ENCODE measurements at regions of chr9 and their contacts with region 1.

Region 1: DNA sequence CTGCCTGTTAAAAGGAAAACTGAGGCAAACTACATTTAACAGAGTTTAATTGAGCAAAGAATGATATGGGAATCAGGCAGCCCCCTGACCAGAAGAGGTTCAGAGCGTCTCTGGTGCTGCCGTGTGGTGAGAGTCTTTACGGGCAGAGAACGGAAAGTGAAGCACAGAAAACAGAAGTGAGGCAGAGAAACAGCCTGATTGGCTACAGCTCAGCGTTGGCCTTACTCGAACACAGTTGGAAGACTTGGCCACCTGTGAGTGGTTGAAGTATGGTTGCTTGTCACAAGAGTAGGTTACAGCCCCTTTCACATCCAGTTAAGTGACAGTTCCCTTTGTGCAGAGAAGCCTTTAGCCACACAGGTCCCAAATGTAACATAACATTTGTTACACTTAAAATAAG is 16.9 kb upstream of the FBP1 start:
- DNase-seq: peak in 9 of 10 donors; percentile 17 to 70 (median 41)
- ATAC-seq: peak; percentile 99
- H3K4me3 Mint-ChIP-seq: peak overlapping the region; percentile 69 to 87 (median 82)
- H3K27ac Mint-ChIP-seq: peak overlapping the region; percentile 78 to 96 (median 92)
- H3K4me1 Mint-ChIP-seq: peaks cover 12 to 32% (median 22%) of the 10 kb centered on the region in 4 donors
- H3K27me3 Mint-ChIP-seq: peaks cover 0 to 16% (median 2%) of the 10 kb centered on the region in 5 donors

Region 2: DNA sequence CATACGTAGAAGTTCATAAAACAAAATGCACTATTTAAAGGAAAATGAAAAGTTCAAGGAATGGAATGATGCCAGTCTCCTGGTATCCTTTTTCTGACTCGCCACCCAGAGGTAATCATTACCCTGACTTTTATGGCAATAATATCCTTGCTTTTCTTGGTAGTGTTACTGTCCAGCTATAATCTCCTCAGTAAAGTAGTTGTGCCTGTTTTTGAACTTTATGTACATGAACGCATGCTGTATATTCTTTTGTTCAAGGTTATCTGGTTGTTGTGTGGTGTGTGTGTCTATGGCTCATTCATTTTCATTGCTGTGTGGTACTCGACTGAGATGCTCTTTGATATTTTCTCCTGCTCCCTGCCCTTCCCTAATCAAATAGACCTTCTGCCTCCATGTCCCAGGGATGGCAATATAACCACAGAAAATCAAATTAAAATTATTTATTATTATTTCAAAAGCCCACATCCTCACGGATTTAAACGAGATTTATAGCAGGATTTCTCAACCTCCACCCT is 12.3 kb after region 1 on chr9:
- POLR2A ChIA-PET with region 1: interaction called, 16 read pairs
- DNase-seq: no peak
- ATAC-seq: no peak
- H3K4me3 Mint-ChIP-seq: peak overlapping the region in 7 of 10 donors; percentile 85 to 98 (median 94)
- H3K27ac Mint-ChIP-seq: peak overlapping the region in 4 of 10 donors; percentile 38 to 93 (median 72)
- H3K4me1 Mint-ChIP-seq: peaks cover 3 to 9% (median 4%) of the 10 kb centered on the region in 4 donors
- H3K27me3 Mint-ChIP-seq: peaks cover 0 to 16% (median 0%) of the 10 kb centered on the region in 5 donors

Measured in naive thymus-derived CD8-positive, alpha-beta T cell (primary cell).